ENCODE measurements at regions of chr7 and their contacts with region 1.

Region 1: GRCh38 chr7:142796608-142797385 is 26.0 kb downstream of the PRSS2 start:
- DNase-seq: peak in 5 of 10 donors; percentile 18 to 50 (median 33)
- ATAC-seq: peak in 1 of 2 donors; percentile 6
- H3K4me3 Mint-ChIP-seq: peak overlapping the region; percentile 87 to 100 (median 98)
- H3K27ac Mint-ChIP-seq: peak overlapping the region; percentile 94 to 100 (median 100)
- H3K4me1 Mint-ChIP-seq: peaks cover 50 to 86% (median 71%) of the 10 kb centered on the region in 4 donors
- H3K27me3 Mint-ChIP-seq: no peaks in the 10 kb centered on the region

Region 2: DNA sequence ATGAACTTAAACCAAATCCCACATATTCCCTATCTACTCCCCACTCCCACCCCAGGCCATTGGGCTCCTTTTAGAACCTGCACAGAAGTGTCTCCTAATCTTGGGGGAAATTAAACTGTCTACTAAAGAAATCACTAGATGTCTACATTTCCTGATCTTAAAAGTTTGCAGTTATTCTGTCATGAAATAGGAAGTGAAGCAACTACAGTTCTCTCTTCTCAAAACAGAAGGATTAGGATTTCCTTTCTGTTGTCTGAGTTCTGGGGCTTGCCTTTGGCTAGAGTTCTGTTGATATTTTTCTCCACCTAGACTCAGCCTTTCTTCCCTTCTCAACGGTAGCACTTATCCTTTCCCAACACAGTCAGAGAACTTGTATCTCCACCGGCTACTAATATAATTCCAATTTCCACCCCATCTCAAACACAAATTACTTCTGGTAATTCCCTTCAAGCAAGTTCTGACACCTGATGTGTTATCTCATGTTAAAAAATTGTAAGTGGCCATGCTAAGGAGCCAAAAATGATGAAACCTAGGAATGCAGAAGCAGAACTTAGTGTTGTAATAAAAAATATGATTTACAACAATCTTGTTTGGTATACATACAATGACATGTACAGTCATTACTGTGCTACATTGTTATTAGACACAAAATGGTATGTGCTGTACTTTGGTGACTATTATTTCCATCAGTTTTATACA is 868.5 kb before region 1 on chr7:
- POLR2A ChIA-PET with region 1: no interaction called
- DNase-seq: no peak
- ATAC-seq: no peak
- H3K4me3 Mint-ChIP-seq: no peak overlapping the region
- H3K27ac Mint-ChIP-seq: no peak overlapping the region
- H3K4me1 Mint-ChIP-seq: no peaks in the 10 kb centered on the region
- H3K27me3 Mint-ChIP-seq: peaks cover 2 to 24% (median 8%) of the 10 kb centered on the region in 5 donors

Region 3: DNA sequence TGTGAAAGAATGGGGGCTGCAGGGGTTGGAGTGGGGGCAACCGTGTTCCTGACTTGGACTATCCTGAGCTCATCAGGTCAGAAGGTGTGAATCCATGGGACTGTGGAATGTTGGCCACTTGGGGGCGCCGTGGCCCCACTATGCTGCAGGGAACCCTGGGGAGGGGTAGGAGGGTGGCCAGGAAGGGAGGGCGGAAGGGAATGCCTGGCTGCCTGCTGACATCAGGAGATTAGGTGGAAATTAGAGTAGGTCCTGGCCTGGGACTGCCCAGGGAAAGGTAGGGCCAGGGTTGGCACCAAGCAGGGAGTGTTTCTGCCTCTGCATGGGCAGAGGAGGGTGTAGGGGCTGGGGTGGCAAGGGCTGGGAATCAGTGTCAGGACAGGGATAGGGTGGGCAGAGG is 473.1 kb before region 1 on chr7:
- POLR2A ChIA-PET with region 1: interaction called, 55 read pairs
- DNase-seq: peak in 5 of 10 donors; percentile 29 to 67 (median 36)
- ATAC-seq: peak; percentile 48 to 55
- H3K4me3 Mint-ChIP-seq: peak overlapping the region in 3 of 10 donors; percentile 12 to 75 (median 33)
- H3K27ac Mint-ChIP-seq: peak overlapping the region in 9 of 10 donors; percentile 9 to 91 (median 52)
- H3K4me1 Mint-ChIP-seq: peaks cover 17 to 20% (median 18%) of the 10 kb centered on the region in 4 donors
- H3K27me3 Mint-ChIP-seq: peaks cover 2 to 41% (median 6%) of the 10 kb centered on the region in 5 donors

Region 4: GRCh38 chr7:142391191-142391992 is 405.4 kb before region 1 on chr7:
- POLR2A ChIA-PET with region 1: interaction called, 35 read pairs
- DNase-seq: peak in 9 of 10 donors; percentile 20 to 67 (median 40)
- ATAC-seq: peak; percentile 83 to 85
- H3K4me3 Mint-ChIP-seq: peak overlapping the region; percentile 29 to 84 (median 63)
- H3K27ac Mint-ChIP-seq: peak overlapping the region; percentile 25 to 71 (median 61)
- H3K4me1 Mint-ChIP-seq: peaks cover 0 to 7% (median 3%) of the 10 kb centered on the region in 4 donors
- H3K27me3 Mint-ChIP-seq: peaks cover 0 to under 1% (median 0%) of the 10 kb centered on the region in 5 donors

Region 5: GRCh38 chr7:142459551-142459963 is 337.2 kb before region 1 on chr7:
- POLR2A ChIA-PET with region 1: interaction called, 39 read pairs
- DNase-seq: peak in 6 of 10 donors; percentile 24 to 44 (median 36)
- ATAC-seq: peak; percentile 43 to 49
- H3K4me3 Mint-ChIP-seq: peak overlapping the region in 8 of 10 donors; percentile 28 to 77 (median 45)
- H3K27ac Mint-ChIP-seq: peak overlapping the region; percentile 1 to 89 (median 70)
- H3K4me1 Mint-ChIP-seq: peaks cover 21 to 52% (median 50%) of the 10 kb centered on the region in 4 donors
- H3K27me3 Mint-ChIP-seq: no peaks in the 10 kb centered on the region

Region 6: DNA sequence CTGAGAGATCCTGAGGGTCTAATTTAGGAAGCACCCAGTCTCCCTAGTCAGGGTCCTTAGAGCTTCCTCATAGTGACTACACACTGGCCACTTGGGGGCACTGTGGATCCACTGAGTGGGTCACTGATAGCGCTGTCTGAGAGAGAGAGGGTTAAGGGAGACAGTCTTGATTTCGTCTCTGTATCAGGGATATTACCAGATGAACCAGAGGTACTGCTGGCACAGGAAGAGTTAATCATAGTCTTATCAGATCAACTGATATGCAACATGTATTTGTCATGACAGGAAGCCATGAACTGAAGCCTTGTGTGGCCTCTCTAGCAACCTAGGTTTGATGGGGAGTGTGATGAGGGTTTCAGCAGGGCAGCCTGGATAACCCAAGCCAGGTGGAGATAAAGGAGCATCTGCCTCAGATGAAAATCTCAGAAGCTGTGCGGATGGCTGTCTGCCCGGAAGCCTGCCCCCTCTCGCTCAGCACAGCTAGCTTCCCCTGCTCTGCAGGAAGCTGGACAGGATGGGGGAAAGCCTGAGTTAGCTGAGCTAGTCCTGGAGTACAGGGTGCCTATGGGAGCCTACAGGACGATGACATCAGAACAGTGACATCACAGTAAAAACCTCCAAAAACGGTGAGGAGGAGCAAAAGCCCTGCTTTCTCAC is 261.5 kb before region 1 on chr7:
- POLR2A ChIA-PET with region 1: interaction called, 26 read pairs
- DNase-seq: peak; percentile 44 to 80 (median 58)
- ATAC-seq: peak; percentile 80 to 85
- H3K4me3 Mint-ChIP-seq: peak overlapping the region; percentile 44 to 82 (median 72)
- H3K27ac Mint-ChIP-seq: peak overlapping the region; percentile 63 to 91 (median 80)
- H3K4me1 Mint-ChIP-seq: peaks cover 5 to 31% (median 23%) of the 10 kb centered on the region in 4 donors
- H3K27me3 Mint-ChIP-seq: no peaks in the 10 kb centered on the region

Region 7: GRCh38 chr7:142632291-142633134 is 164.3 kb before region 1 on chr7:
- POLR2A ChIA-PET with region 1: interaction called, 34 read pairs
- DNase-seq: peak; percentile 29 to 76 (median 60)
- ATAC-seq: peak; percentile 36 to 65
- H3K4me3 Mint-ChIP-seq: peak overlapping the region in 3 of 10 donors; percentile 20 to 64 (median 34)
- H3K27ac Mint-ChIP-seq: peak overlapping the region in 7 of 10 donors; percentile 58 to 91 (median 71)
- H3K4me1 Mint-ChIP-seq: peaks cover 4 to 19% (median 9%) of the 10 kb centered on the region in 4 donors
- H3K27me3 Mint-ChIP-seq: peaks cover 0 to 6% (median 1%) of the 10 kb centered on the region in 5 donors

Region 8: DNA sequence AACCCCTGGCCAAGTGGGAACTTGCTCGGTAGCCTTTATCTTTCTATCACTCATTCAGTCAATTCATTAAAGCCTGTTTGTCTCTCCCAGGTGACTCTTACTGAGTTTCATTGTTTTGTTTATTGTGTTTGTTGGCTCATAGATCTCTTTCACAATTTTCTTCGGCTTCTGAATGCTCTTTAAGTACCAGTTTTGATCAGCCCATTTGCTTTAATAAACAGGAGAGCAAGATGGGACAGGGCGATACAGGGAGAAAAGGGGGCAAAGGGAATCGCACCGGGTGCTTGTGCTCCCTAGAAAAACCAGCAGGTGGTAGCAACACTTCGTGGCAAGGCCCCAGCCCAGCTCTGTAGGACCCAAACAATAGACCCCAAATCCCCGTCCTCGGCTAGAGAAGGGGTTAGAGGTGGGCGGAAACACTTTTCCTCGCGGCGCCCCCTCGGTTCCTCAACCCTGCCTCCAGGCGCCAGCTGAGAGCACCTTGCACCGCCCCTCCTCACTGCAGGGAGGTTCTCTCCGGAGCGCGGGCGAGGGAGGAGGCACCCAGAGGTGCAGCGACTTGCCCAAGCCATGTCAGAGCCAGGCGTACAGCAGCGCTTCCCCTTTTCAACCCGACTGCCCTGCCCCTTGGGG is 57.1 kb after region 1 on chr7:
- POLR2A ChIA-PET with region 1: interaction called, 12 read pairs
- DNase-seq: peak; percentile 42 to 81 (median 62)
- ATAC-seq: peak; percentile 82 to 84
- H3K4me3 Mint-ChIP-seq: peak overlapping the region; percentile 89 to 99 (median 96)
- H3K27ac Mint-ChIP-seq: peak overlapping the region; percentile 33 to 94 (median 88)
- H3K4me1 Mint-ChIP-seq: peaks cover 12 to 25% (median 20%) of the 10 kb centered on the region in 4 donors
- H3K27me3 Mint-ChIP-seq: peaks cover 0 to 3% (median 0%) of the 10 kb centered on the region in 5 donors

Measured in naive thymus-derived CD8-positive, alpha-beta T cell (primary cell).